Right ventricle myocardium superior (tissue), 1 donor: ENCODE measurements at regions of chr11 and their contacts with region 1.

Region 1: GRCh38 chr11:80146232-80146631 is 705.4 kb upstream of the TENM4 start:
- DNase-seq: no peak
- ATAC-seq: no peak

Region 2: DNA sequence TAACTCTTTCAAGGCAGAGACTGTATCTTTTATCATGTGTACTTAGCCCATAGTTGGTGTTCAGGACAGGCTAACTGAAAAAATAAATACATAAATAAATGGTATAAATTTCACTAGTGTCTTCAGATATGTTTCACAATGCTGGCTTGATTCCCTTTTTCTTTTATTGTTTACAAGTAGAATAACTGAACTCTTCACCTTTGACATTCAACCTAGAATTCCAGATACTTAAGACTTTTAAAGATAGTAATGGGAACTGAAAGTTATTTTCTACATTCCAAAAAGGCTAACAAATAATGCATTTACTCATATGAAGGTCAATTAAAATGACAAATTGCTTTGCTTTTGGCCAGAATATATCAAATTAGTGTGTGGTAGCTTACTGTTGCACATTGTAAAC is 294.1 kb before region 1 on chr11:
- intact Hi-C with region 1: no loop called
- DNase-seq: no peak
- ATAC-seq: no peak

Region 3: GRCh38 chr11:79925570-79925969 is 220.7 kb before region 1 on chr11:
- intact Hi-C with region 1: loop called (anchors 5 kb)
- DNase-seq: no peak
- ATAC-seq: no peak